ENCODE measurements at regions of chr14 and their contacts with region 1.

Region 1: DNA sequence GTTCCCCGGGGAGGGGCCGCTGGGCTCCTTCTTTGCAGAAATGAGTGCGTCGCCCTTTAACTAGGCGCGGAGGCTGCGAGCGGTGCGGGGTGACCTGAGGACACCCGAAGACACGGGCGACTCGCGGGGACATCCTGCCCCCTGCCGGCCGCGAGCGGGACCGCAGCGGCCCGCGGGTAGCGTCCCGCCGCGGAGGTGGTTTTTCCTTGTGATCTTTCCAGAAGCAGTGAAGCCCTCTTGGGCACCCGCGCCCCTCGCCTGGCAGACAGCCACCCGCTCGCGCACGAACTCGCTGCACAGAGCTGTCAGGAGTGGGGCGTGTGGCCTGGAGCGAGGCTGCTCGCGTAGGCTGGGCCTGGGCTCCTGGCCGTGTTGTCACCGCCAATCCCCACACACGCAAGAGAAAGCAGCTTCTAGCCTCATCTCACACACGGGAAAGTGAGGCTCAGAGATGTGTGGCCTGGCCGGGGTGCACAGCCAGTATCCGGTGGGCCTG is 67.2 kb downstream of the DIO3 start:
- DNase-seq: peak; percentile 86

Region 2: GRCh38 chr14:100662879-100663760 is 965.4 kb before region 1 on chr14:
- intact Hi-C with region 1: loop called (anchors 5 kb)
- DNase-seq: no peak

Measured in cardiac septum (tissue), 1 donor.